Breast epithelium (tissue), 4 donors: ENCODE measurements at regions of chr11 and their contacts with region 1.

Region 1: DNA sequence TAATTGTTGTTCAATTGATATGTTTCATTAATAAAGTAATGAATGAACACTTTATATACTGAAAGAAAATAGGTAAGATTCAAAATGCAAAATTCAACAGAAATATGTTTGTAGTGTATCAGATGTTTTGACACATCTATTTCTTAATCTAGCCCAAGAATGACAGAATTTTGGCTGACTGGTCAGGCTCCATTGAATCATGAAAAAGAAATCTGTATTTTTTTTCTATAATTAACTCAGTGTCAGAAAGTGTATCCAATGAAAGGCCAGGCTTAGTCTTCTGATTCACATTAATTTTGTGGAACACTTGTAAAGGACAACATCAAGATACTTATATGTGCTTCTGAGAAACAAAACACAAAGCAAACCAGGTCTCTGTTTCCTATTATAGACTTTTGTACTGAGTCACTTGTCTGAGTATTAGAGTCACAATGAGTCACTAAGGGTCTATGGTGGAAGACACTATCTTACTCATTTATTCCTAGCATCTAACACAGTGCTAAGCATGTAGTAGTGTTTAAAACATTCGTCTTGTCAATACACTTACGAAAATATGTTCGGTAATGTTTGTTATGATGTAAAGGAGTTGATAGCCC is 297.7 kb upstream of the CCDC90B start:
- DNase-seq: no peak
- H3K4me3 ChIP-seq: no peak overlapping the region
- H3K27ac ChIP-seq: no peak overlapping the region
- H3K4me1 ChIP-seq: no peaks in the 10 kb centered on the region
- H3K27me3 ChIP-seq: no peaks in the 10 kb centered on the region
- CTCF ChIP-seq: no peak
- POLR2A ChIP-seq: no peak

Region 2: DNA sequence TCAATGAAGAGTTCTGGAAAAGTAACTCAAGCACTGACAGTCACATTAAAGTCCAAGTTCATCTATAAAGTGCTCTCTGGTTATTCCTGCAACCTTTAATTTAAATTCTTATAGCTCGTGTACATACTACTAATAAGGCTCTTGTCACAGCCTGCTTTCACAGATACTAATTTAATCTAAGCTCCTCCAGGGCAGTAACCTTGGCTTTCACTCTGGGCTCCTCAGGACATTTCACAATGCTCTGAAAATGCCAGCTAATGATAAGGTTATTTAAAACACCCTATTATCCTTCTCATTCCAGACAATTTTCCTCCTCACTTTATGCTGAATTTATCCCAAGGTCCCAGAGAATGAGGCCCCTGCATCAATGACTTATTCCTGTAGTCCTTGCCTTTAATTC is 55.0 kb before region 1 on chr11:
- intact Hi-C with region 1: loop called (anchors 2 kb)
- DNase-seq: no peak
- H3K4me3 ChIP-seq: no peak overlapping the region
- H3K27ac ChIP-seq: no peak overlapping the region
- H3K4me1 ChIP-seq: no peaks in the 10 kb centered on the region
- H3K27me3 ChIP-seq: no peaks in the 10 kb centered on the region
- CTCF ChIP-seq: no peak
- POLR2A ChIP-seq: no peak